GM18951 (cell line): ENCODE measurements at regions of chr18 and their contacts with region 1.

Region 1: GRCh38 chr18:12049978-12050811 is 43.4 kb upstream of the ANKRD62 start:
- POLR2A ChIP-seq: no peak

Region 2: DNA sequence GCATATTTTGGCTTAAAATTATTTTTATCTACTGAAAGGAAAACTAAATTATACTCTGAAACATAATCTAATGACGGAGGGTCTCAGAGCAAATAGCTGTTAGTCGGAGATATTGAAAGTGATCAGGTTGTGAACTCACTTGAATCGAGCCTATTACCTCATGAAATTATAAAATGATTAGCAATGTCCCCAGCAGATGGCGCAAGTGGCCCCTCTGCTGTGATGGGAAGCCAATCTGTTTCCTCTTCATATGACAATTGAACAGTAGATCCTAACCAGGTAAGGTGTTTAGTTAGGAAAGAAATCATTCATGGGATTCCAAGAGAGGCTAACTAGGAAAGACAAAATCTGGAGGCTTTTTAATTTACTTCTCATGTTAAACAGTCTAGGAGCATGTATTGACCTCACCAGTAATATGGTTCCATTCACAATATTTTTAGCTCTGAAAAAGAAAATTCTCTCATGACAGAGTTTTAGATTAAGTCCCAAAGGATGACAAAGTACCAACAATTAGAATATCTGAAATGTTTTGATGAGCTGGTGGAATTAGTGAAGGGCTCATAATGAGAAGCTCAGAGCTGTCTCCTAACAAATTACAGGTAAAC is 112.2 kb before region 1 on chr18:
- in situ Hi-C with region 1: loop called (anchors 10 kb)
- POLR2A ChIP-seq: no peak

Region 3: DNA sequence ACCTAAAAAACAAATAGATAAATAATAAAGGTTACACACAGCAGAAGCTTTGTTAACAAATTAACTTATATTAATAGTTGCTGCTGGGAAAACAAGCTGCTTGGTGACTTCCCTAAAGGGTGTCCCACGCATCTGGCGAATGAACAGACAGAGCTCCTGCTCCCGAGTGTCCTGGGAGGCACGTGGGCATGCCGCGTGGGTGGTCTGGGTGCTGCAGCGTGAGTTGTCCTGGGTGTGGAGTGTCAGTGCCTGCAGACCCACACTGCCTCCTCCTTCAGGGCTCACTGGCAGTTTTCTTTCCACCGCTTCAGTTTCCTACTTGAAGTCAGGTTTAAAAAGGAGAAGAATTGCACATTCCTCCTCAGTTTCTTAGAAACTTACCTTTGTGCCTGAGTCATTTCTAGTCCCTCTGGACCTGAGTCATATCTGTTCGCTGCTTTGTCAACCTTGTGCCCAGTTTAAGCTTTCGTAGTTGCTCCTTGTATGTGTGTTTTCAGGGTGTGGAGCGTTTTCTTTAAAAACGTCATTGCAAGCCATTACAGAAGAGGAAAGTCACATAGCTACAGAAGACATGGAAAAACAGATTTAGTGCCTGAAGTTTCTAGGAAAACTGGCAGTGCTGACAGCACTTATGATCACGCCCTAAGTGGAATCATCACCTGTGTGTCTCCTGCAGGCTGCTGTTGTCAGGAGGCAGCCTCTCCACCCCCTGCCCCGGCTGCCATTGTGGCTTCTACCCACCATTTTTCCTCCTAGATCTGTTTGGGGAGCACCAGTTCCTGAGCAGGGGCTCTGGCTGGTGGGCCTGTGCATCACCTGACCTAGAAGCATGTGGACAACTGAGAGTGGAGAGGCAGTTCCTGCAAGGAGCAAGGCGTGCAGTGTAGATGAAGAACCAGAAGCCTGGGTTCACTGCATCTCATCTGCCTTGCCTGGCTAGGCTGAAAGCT is 44.4 kb before region 1 on chr18:
- in situ Hi-C with region 1: no loop called
- POLR2A ChIP-seq: no peak